HEK293 (cell line): ENCODE measurements at regions of chr1 and their contacts with region 1.

Region 1: DNA sequence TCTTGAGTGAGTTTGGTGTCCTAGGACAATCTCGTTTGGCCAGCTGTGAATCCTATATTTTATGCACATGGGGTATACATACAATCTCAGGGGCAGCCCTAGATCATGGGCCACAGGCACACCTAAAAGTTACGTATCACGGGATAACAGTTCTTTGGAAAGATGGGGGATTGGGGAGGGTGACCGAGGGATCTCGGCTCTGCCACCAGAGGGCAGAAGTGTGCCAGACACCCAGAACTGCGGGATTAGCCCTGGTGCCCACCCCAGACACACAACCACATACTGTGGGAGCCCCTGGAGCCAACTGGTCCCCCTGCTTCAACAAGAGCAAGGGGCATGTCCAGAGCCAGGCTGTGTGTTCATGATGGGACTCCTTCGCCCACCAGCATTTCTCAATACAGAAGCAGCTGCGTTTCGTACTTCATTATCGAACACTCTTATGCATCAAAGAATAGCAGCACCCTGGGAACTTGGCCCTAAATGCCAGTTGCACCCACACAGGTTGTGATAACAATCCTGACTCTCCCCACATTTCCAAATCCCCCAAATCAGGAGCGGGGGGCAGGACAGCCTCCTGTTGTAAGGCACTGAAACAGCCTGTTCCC is 37.4 kb downstream of the TMCO4 start:
- H3K4me3 ChIP-seq: no peak overlapping the region
- H3K27ac ChIP-seq: no peak overlapping the region
- H3K4me1 ChIP-seq: no peaks in the 10 kb centered on the region
- CTCF ChIP-seq: peak; percentile 73

Region 2: DNA sequence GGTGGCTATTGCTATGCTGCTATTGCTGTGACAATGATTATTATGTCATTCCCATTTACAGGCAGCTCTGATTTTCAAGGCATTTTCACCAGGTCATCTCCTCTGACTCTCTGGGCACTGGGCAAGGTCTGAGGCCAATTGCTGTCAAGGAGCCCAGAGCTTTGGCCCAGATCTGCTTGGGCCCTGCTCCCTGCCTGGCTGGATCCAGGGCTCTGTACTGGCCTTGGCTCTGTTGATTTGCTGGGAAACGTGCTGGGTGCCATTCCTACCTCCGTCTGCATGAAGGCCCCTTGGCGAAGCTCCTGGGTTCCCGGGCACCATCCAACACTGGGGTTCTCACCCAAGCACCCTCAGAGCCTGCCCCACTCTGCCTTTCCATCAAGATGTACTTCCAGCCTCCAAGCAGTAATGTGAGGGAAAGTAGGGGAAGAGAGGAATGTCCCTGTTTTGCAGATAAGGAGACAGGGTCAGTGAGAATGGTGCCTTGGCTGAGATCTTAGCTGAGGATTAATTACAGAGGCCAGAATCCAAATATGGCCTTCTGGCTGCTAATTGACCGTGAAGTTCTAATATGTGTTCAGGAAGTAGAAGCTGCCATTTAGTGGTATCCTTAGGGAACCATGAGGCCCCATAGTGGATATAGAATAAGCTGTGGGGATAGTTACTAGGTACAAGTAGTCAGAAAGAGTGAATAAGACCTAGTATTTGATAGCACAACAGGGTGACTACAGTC is 33.7 kb before region 1 on chr1:
- CTCF ChIA-PET with region 1: interaction called, 10 read pairs
- POLR2A ChIA-PET with region 1: no interaction called
- H3K4me3 ChIP-seq: no peak overlapping the region
- H3K27ac ChIP-seq: no peak overlapping the region
- H3K4me1 ChIP-seq: no peaks in the 10 kb centered on the region
- CTCF ChIP-seq: no peak

Region 3: GRCh38 chr1:19775320-19775719 is 13.0 kb after region 1 on chr1:
- CTCF ChIA-PET with region 1: interaction called, 15 read pairs
- POLR2A ChIA-PET with region 1: no interaction called
- H3K4me3 ChIP-seq: no peak overlapping the region
- H3K27ac ChIP-seq: no peak overlapping the region
- H3K4me1 ChIP-seq: no peaks in the 10 kb centered on the region
- CTCF ChIP-seq: no peak

Region 4: GRCh38 chr1:19811206-19811851 is 49.1 kb after region 1 on chr1:
- CTCF ChIA-PET with region 1: interaction called, 27 read pairs
- POLR2A ChIA-PET with region 1: no interaction called
- H3K4me3 ChIP-seq: no peak overlapping the region
- H3K27ac ChIP-seq: no peak overlapping the region
- H3K4me1 ChIP-seq: peaks cover 4% of the 10 kb centered on the region; the same call in 1 of the 2 replicates
- CTCF ChIP-seq: 0 out of 2 replicates have a peak, but pooled peaks have one; percentile 40

Region 5: DNA sequence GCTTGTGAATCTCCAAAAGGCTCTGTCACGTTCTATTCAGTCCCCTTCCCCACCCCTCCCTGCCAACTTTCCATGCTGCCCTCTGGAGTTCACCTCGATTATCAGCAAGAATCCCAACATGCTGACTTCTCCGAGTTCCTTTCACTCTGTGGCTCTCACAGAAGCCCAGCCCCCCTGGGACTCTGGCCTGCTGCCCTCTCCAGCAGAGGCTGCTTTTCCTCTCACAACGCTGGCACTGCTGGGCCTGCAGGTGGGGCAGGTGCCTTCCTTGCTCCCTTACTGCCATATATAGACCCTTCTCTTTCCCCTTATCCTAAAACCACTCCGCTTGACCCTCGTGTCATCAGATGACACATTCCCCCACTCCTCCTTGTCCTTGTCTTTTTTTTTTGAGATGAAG is 63.0 kb after region 1 on chr1:
- CTCF ChIA-PET with region 1: interaction called, 3 read pairs
- POLR2A ChIA-PET with region 1: interaction called, 10 read pairs
- H3K4me3 ChIP-seq: no peak overlapping the region
- H3K27ac ChIP-seq: no peak overlapping the region
- H3K4me1 ChIP-seq: no peaks in the 10 kb centered on the region
- CTCF ChIP-seq: no peak